ENCODE measurements at regions of chr4 and their contacts with region 1.

Region 1: DNA sequence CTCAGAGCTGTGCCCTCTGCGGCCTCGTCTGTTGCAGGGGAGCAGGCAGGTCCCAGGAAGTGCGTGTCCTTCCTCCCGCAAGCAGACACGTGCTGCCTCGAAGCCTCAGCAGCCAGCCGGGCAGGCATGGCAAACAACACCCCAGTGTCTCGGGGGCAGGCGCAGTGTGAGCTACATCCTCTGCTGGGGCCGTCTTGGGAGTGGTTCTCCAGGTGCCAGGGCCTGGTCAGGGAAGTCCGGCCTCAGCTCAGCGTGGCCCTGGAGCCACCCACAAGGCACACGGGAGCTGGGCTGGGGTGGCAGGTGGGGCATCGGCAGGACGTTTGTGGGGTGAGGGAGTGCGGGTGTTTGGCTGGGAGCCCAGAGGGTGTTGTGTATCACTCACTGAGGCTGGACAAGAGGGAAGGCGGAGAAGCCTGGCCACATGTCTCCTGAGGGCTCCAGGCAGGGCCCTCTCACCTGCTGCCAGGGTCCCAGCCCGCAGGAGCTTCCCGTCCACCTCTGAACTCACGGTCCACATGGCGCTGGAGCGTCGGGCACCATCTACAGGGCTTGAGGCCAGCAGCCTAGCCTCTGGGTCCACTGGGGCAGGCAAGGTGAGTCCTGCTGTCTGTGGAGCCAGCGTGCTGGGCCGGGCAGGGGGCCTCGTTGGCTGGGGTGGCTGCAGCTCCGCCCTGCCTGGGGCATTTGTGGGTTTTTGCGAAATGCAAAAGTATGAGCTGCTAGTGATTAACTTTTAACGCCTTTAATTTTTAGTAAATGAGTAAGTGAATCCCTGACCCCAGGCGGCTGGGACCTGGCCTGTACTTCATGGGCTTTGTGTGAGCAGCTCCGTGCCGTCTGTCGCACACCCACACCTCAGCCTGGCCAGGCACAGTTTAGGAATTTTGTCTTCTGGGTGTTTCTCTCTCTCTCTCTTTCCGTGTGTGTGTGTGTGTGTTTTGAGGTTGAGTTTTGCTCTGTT is 17.3 kb upstream of the UVSSA start:
- DNase-seq: peak in 10 of 14 experiments; percentile 15 to 84 (median 56)
- ATAC-seq: peak; percentile 63
- H3K4me3 ChIP-seq: no peak overlapping the region
- H3K4me3 Mint-ChIP-seq: peak overlapping the region; percentile 83
- H3K27ac ChIP-seq: peak overlapping the region; percentile 41 to 47
- H3K27ac Mint-ChIP-seq: peak overlapping the region; percentile 91
- H3K4me1 ChIP-seq: peaks cover 79% of the 10 kb centered on the region
- H3K4me1 Mint-ChIP-seq: peaks cover 32% of the 10 kb centered on the region
- H3K27me3 ChIP-seq: no peaks in the 10 kb centered on the region
- H3K27me3 Mint-ChIP-seq: no peaks in the 10 kb centered on the region
- CTCF ChIP-seq: no peak

Region 2: DNA sequence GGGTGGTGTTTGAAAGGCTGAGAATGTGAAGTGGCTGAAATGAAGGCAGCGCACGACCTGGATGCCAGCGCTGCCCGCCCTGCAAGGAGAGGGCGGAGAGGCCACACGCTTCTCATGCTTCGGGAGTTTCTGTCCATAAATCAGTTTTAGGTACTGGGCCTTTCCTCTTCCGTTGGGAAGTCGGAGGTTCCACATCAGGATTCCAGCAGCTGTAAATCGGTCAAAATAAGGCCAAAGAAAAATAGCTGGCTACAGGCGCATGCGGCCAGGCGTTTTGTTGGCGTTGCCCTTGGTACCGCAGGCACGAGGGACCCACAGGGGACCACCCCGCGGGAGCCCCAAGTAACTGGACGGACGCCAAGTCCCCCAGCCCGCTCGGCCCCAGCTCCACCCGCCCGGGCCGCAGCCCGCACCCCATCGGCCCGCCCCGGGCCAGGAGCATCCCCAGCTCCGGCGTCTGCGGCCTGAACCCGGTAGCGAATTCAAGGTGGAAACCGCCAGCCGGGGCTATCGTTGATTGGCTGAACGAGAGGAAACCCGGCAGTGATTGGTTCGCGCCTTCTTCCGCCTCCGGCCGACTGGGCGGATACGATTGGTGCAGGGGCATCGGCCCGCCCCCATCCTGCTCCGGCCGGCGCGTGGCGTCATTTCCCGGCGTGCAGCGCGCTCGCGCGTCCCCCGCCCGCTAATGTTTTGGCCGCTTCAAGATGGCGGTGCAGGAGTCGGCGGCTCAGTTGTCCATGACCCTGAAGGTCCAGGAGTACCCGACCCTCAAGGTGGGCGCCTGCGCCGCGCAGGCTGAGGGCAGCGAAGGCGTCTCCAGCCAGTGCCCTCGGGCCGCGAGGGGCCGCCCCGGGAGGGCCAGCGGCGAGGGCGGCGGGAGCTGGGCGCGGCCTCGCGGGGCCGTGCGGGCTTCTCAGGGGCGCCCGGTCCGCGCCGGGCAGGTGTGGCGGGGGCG is 40.2 kb before region 1 on chr4 and contains the start of gene MAEA:
- CTCF ChIA-PET with region 1: interaction called, 3 read pairs
- POLR2A ChIA-PET with region 1: interaction called, 8 read pairs
- intact Hi-C with region 1: loop called in 1 of 2 experiments (anchors 1 kb)
- DNase-seq: peak; percentile 94 to 98 (median 96)
- ATAC-seq: peak; percentile 99
- H3K4me3 ChIP-seq: peak within 1 kb of the TSS; percentile 73
- H3K4me3 Mint-ChIP-seq: peak within 1 kb of the TSS; percentile 93
- H3K27ac ChIP-seq: peak within 1 kb of the TSS; percentile 60 to 83
- H3K27ac Mint-ChIP-seq: peak within 1 kb of the TSS; percentile 93
- H3K4me1 ChIP-seq: peaks cover 46% of the 10 kb centered on the region
- H3K4me1 Mint-ChIP-seq: peaks cover 45% of the 10 kb centered on the region
- H3K27me3 ChIP-seq: no peaks in the 10 kb centered on the region
- H3K27me3 Mint-ChIP-seq: no peaks in the 10 kb centered on the region
- CTCF ChIP-seq: no peak
- total RNA-seq, gene MAEA: 61.5 to 63.2 TPM

Region 3: GRCh38 chr4:1309261-1310010 is 20.3 kb before region 1 on chr4:
- CTCF ChIA-PET with region 1: no interaction called
- POLR2A ChIA-PET with region 1: interaction called, 19 read pairs
- intact Hi-C with region 1: no loop called
- DNase-seq: peak in 12 of 14 experiments; percentile 32 to 81 (median 52)
- ATAC-seq: peak; percentile 51
- H3K4me3 ChIP-seq: peak overlapping the region; percentile 44
- H3K4me3 Mint-ChIP-seq: peak overlapping the region; percentile 76
- H3K27ac ChIP-seq: peak overlapping the region in 1 of 2 donors; percentile 39
- H3K27ac Mint-ChIP-seq: peak overlapping the region; percentile 82
- H3K4me1 ChIP-seq: peaks cover 69% of the 10 kb centered on the region
- H3K4me1 Mint-ChIP-seq: peaks cover 65% of the 10 kb centered on the region
- H3K27me3 ChIP-seq: no peaks in the 10 kb centered on the region
- H3K27me3 Mint-ChIP-seq: no peaks in the 10 kb centered on the region
- CTCF ChIP-seq: no peak

Region 4: DNA sequence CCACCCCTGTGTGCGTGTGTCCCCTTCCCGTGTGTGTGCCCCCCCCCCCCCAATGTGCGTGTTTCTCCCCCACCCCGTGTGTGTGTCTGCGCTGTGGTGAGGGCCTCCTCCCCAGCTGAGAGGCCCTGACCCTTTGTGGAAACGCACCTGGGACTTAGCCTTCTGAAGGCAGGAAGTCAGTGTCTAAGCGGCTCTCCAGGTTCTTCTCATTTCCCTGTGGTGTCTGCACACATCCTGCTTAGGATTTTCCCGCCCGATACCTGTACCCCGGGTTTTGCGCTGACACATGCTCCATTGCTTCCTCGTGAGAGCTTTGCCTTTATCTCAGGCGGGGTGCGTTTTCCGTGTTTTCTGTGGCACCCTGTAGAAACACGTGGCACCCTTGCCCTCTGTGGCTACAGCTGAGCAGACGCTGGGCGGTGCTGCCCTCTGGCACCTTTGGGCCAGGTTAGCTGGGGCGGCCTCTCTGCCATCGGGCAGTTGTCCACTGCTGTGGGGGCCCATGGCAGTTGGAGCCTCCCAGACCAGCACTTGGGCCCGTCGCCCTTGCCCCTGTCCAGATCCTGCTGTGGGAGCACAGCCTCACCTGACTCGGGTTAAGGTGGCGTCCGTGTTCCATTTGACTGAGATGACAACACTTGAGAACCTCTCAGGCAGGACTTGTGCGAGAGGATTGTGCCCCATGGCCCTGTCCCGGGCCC is 13.7 kb before region 1 on chr4:
- CTCF ChIA-PET with region 1: interaction called, 5 read pairs
- POLR2A ChIA-PET with region 1: interaction called, 19 read pairs
- intact Hi-C with region 1: no loop called
- DNase-seq: peak in 2 of 14 experiments; percentile 26 to 49
- ATAC-seq: peak; percentile 45
- H3K4me3 ChIP-seq: no peak overlapping the region
- H3K4me3 Mint-ChIP-seq: peak overlapping the region; percentile 30
- H3K27ac ChIP-seq: peak overlapping the region in 1 of 2 donors; percentile 21
- H3K27ac Mint-ChIP-seq: peak overlapping the region; percentile 78
- H3K4me1 ChIP-seq: peaks cover 37% of the 10 kb centered on the region
- H3K4me1 Mint-ChIP-seq: peaks cover 28% of the 10 kb centered on the region
- H3K27me3 ChIP-seq: no peaks in the 10 kb centered on the region
- H3K27me3 Mint-ChIP-seq: no peaks in the 10 kb centered on the region
- CTCF ChIP-seq: no peak

Measured in CD4-positive, alpha-beta T cell (primary cell).